ENCODE measurements at regions of chr4 and their contacts with region 1.

Region 1: DNA sequence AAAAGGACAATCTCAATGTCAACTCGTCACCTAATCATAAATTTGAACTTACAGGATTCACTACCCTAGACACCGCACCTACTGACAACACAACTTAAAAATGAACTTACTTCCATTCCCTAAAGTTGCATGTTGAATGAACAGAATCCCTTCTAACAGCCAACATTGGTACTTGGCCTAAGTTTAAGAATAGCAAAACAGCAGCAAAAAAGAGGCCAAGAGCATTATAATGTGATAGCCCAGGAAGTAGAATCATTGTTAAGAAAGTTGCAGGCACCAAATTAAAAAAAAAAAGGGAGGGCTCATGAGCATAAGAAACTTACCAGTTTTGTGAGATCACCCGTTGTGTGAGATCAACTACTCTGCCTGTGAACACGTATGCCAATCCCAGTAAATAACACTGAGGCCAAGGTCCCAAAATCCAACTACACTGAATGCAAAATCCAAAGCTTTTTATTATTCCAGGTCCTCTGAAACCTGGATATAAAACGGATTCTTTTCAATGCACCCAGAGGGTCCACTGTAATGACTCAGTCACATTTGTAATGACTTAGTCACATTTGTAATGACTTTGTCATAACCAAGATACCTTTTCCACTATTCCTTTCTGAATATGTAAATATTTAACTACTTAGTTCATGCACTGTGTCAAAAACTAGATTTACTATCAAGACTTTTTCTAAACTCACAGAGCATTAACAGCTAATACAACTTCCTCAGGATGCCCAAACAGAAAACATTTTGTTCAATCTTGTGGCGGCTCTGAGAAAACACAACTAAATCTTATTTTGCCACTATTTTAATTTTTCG is 6.8 kb downstream of the HNRNPDL start:
- DNase-seq: no peak
- H3K4me3 ChIP-seq: no peak overlapping the region
- H3K27ac ChIP-seq: no peak overlapping the region
- H3K4me1 ChIP-seq: peaks cover 27% of the 10 kb centered on the region
- H3K27me3 ChIP-seq: no peaks in the 10 kb centered on the region
- CTCF ChIP-seq: no peak
- POLR2A ChIP-seq: no peak

Region 2: DNA sequence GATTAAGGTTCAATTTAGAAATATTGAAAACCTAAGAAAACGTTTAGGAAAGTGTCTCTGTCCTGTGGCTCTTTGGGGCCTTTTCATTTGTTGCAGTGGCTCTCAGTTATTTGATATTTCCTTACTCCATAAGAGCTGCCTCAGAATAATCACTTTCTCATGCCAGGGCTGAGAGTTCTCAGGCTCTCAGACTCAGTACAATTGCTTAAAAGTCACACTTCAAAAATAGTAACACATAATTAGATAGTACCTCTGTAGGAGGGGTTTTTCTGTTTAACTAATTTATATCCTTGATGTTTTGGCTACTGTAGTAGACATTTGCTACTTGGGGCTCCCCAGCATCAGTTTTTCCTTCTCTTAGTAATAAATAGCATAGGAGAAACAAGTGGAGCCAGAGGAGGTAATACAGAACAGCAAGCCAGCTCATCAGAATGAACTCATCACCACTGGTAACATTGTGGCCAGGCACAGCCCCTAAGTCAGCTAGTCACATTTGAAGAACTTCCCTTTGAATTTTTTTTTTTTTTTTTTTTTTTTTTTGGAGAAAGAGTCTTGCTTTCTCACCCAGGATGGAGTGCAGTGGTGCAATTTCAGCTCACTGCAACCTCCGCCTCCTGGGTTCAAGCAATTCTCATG is 41.7 kb before region 1 on chr4:
- intact Hi-C with region 1: loop called (anchors 2 kb)
- DNase-seq: no peak
- H3K4me3 ChIP-seq: no peak overlapping the region
- H3K27ac ChIP-seq: no peak overlapping the region
- H3K4me1 ChIP-seq: no peaks in the 10 kb centered on the region
- H3K27me3 ChIP-seq: no peaks in the 10 kb centered on the region
- CTCF ChIP-seq: no peak
- POLR2A ChIP-seq: no peak

Region 3: GRCh38 chr4:82865592-82865991 is 442.1 kb after region 1 on chr4:
- intact Hi-C with region 1: no loop called
- DNase-seq: no peak
- H3K4me3 ChIP-seq: no peak overlapping the region
- H3K27ac ChIP-seq: peak overlapping the region; percentile 64
- H3K4me1 ChIP-seq: peaks cover 15% of the 10 kb centered on the region
- H3K27me3 ChIP-seq: no peaks in the 10 kb centered on the region
- CTCF ChIP-seq: no peak
- POLR2A ChIP-seq: no peak